ENCODE measurements at regions of chr1 and their contacts with region 1.

Region 1: DNA sequence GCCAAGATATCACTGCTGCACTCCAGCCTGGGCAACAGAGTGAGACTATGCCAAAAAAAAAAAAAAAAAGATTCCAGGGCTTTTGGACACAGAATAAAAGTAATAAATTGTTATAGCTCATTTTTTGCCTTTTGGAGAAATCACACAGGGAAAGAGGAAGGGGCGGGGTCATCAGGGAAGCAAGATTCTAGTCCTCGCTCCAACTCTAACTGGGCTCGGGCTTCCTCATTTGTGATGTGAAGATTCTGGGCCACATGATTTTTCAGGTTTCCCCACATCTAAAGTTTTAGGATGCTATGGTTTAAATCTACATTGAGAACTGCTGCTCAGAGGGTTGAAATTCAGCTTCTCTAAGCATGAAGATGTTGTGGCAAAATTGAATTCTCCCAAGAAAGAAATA is 179.3 kb upstream of the PLXNA2 start:
- DNase-seq: no peak
- H3K4me3 ChIP-seq: no peak overlapping the region
- CTCF ChIP-seq: no peak

Region 2: DNA sequence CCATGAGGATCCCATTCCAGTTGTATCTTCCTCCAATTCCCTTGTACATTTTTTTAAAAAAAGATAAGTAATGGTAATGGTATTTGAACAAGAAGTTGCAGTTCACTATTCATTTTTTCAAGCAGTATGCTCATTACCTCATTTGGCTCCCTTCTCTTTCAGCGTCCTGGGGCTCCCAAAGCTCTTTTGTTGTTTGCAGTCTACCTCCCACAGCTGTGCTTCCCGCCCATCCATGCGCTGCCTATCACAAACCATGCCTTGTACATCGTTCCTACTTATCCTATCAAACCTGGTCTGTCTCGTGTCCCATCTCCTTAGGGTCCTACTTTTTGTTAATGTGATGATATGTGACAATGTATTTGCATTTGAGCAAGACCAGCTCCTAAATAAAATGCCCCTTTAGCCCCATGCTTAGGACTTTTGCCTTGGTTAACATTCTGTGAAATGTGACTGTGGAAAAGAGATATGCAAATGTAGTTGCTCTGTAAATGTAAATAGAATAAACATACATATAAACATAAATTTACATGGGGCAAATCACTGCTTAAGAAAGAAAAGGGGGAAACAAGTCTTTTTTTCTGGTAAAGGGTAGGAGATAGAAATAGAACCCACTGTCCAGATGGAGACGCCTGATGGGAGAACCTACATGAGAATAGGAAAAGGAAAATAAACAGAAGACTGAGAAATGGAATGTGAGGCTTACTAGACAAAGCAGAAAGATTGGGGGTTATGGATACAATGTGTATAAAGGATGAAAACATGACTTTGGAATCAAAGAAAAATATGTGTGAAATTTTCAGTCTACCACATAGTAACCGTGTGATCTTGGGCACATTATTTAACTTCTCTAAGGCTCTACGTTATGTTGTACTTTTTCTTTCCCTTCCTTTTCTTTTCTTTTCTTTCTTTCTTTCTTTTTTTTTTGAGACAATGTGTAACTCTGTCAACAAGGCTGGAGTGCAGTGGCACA is 119.5 kb before region 1 on chr1:
- in situ Hi-C with region 1: no loop called
- DNase-seq: no peak
- H3K4me3 ChIP-seq: no peak overlapping the region
- CTCF ChIP-seq: no peak

Region 3: DNA sequence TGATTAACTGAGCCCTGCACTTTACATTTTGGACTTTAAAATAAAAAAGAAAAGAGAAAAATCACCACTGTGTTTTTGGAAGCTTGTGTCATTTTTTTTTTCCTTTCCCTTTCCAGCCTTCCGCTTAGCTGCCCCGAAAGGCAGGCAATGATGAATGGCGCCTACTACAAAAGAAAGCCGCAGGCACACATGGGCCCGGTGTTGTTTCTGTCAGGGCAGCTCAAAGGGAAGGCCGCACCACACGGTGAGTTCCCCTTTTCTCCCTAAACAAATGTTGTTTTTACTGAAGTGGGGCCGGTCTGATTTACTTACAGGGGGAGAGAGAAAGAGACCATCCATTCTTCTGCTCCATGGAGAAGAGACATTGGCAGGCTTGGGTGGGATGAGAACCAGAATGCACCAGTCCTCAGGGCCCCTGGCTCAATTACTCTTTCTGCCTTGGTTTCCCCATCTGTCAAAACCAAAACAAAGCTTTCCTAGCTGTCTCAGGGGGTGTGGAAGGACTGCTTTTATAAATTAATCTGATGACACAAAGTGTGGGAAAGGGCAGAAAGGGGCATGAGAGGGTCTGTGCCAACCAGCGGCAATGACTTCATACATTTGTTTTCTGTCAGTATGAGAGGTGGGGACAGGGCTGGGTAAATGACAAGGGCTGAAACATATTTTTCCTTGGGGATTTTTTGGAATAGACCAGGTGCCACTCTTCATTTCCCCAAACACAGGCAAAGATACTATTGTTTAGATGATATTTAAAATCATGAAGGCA is 88.0 kb before region 1 on chr1:
- in situ Hi-C with region 1: loop called (anchors 5 kb)
- DNase-seq: no peak
- H3K4me3 ChIP-seq: no peak overlapping the region
- CTCF ChIP-seq: no peak

Region 4: GRCh38 chr1:208500375-208500774 is 76.8 kb after region 1 on chr1:
- in situ Hi-C with region 1: loop called (anchors 5 kb)
- DNase-seq: no peak
- H3K4me3 ChIP-seq: no peak overlapping the region
- CTCF ChIP-seq: no peak